Dendritic cell treated with granulocyte-macrophage colony-stimulating factor and Interleukin-4, amounts not matched to agents 40 ng/mL and 50 ng/mL, for 4 days (primary cell): ENCODE measurements at regions of chr13 and their contacts with region 1.

Region 1: GRCh38 chr13:45055198-45055901 is 65.0 kb upstream of the GTF2F2 start:
- H3K4me3 Mint-ChIP-seq: no peak overlapping the region
- H3K27ac Mint-ChIP-seq: no peak overlapping the region
- H3K4me1 Mint-ChIP-seq: peaks cover 55% of the 10 kb centered on the region
- H3K27me3 Mint-ChIP-seq: peaks cover 4% of the 10 kb centered on the region

Region 2: GRCh38 chr13:44969551-44970484 is 85.5 kb before region 1 on chr13:
- intact Hi-C with region 1: no loop called
- H3K4me3 Mint-ChIP-seq: no peak overlapping the region
- H3K27ac Mint-ChIP-seq: no peak overlapping the region
- H3K4me1 Mint-ChIP-seq: no peaks in the 10 kb centered on the region
- H3K27me3 Mint-ChIP-seq: no peaks in the 10 kb centered on the region

Region 3: GRCh38 chr13:45119991-45120864 is 64.9 kb after region 1 on chr13 and contains the start of gene GTF2F2:
- intact Hi-C with region 1: loop called (anchors 10 kb)
- H3K4me3 Mint-ChIP-seq: no peak within 1 kb of the TSS
- H3K27ac Mint-ChIP-seq: no peak within 1 kb of the TSS
- H3K4me1 Mint-ChIP-seq: peaks cover 13% of the 10 kb centered on the region
- H3K27me3 Mint-ChIP-seq: peaks cover 1% of the 10 kb centered on the region

Region 4: GRCh38 chr13:45194081-45194939 is 139.0 kb after region 1 on chr13:
- intact Hi-C with region 1: loop called (anchors 10 kb)
- H3K4me3 Mint-ChIP-seq: peak overlapping the region; percentile 27
- H3K27ac Mint-ChIP-seq: peak overlapping the region; percentile 40
- H3K4me1 Mint-ChIP-seq: peaks cover 35% of the 10 kb centered on the region
- H3K27me3 Mint-ChIP-seq: no peaks in the 10 kb centered on the region